IMR-90 (cell line): ENCODE measurements at regions of chr17 and their contacts with region 1.

Region 1: DNA sequence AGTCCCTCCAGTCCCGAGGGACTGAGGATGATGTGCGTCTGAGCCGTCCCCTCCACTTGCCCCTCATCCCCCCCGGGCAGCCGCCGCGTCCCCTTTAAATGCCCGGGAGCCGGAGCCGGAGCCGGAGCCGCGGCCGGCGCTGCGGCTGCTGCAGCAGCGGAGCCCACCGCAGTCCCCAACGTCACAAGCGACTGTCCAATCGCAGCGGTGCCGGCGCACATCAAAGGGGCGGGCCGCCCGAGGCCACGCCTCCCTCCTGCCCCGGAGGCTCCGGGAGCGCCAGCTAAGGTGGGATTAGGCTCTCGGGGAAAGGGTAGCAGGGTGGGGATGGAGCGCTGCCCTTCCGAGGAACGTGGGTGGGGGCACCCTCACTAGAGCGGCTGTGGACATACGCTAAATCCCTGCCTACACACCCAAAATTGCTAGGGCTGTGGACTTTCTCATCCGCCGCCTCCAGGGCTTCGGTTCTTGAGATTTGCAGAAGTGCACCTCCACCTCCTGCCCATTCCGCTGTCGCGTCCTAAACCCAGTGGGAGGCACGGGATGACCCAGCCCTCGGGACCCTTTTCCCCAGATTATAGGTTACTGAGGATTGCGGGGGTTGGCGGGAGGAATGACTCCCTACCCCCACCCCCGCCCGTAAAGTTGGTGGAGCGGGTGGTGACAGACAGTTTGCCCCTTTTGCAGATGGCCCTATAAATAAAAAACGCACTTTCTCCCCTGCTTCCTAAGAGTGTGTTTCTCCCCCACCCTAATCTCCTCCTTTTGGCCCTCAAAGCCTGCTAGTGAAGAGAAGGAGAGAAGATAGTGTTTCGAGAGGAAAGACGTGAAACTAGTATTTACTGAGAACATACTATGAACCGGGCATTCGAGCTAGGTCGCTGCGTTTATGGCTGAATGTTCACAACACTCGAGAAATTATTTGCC is at the start of gene PHOSPHO1:
- DNase-seq: peak; percentile 76
- ATAC-seq: peak; percentile 99
- H3K4me3 ChIP-seq: peak within 1 kb of the TSS; percentile 91
- H3K27ac ChIP-seq: no peak within 1 kb of the TSS; the same call in 1 of the 2 replicates
- H3K4me1 ChIP-seq: no peaks in the 10 kb centered on the region
- H3K27me3 ChIP-seq: peaks cover 23% of the 10 kb centered on the region
- CTCF ChIP-seq: no peak
- POLR2A ChIP-seq: no peak
- RAD21 ChIP-seq: 0 out of 2 replicates have a peak, but pooled peaks have one; percentile 2
- total RNA-seq, gene PHOSPHO1: under 0.01 TPM in 2 replicates

Region 2: DNA sequence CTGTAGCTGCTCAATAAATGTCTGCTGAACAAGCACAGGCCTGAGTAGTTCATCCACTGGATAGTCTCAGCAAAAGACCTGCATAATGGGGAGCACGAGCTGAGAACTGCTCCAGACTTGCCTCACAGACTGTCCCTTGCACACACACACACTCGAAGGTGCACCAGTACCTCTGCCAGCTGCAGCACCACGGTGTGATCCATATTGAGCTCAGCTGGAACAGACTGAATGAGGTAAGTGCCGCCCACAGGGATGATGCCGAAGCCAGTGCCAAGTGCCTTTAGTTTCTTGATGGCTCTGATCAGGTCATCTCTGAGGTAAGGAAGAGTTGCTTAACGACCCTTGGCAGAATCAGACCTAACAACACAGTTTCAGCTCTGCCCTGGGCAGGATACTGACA is 297.9 kb before region 1 on chr17:
- CTCF ChIA-PET with region 1: no interaction called
- POLR2A ChIA-PET with region 1: no interaction called
- dilution Hi-C with region 1: no loop called
- in situ Hi-C with region 1: no loop called
- intact Hi-C with region 1: no loop called
- DNase-seq: no peak
- ATAC-seq: no peak
- H3K4me3 ChIP-seq: no peak overlapping the region
- H3K27ac ChIP-seq: no peak overlapping the region
- H3K4me1 ChIP-seq: no peaks in the 10 kb centered on the region; the same call in 1 of the 2 replicates
- H3K27me3 ChIP-seq: no peaks in the 10 kb centered on the region
- CTCF ChIP-seq: no peak
- POLR2A ChIP-seq: no peak
- RAD21 ChIP-seq: no peak

Region 3: DNA sequence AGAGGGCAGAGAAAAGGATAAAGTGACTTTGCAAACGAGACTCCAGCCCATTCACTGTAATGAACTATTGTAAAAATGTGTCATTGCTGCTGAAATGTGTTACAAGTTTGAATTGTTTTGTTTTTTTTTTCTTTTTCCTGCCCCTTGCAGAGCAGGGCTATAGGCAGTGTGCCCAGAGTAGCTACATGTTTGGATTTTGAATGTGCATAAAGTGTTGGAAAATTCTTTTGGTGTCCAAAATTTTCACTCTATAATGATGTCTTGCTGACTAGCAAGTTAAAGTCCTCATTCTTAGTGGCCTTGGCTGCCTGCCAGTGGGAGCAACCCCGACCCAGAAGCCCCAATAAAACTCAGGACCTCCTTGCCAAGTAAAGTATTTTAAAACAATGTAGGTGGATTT is 167.2 kb before region 1 on chr17:
- CTCF ChIA-PET with region 1: no interaction called
- POLR2A ChIA-PET with region 1: no interaction called
- dilution Hi-C with region 1: no loop called
- in situ Hi-C with region 1: no loop called
- intact Hi-C with region 1: loop called (anchors 5 kb)
- DNase-seq: no peak
- ATAC-seq: peak; percentile 49
- H3K4me3 ChIP-seq: no peak overlapping the region
- H3K27ac ChIP-seq: no peak overlapping the region
- H3K4me1 ChIP-seq: no peaks in the 10 kb centered on the region
- H3K27me3 ChIP-seq: no peaks in the 10 kb centered on the region
- CTCF ChIP-seq: no peak
- POLR2A ChIP-seq: no peak
- RAD21 ChIP-seq: no peak

Region 4: GRCh38 chr17:49180303-49180702 is 50.6 kb before region 1 on chr17:
- CTCF ChIA-PET with region 1: interaction called, 12 read pairs
- POLR2A ChIA-PET with region 1: no interaction called
- dilution Hi-C with region 1: no loop called
- in situ Hi-C with region 1: no loop called
- intact Hi-C with region 1: loop called (anchors 1 kb)
- DNase-seq: peak; percentile 36
- ATAC-seq: peak; percentile 85
- H3K4me3 ChIP-seq: no peak overlapping the region
- H3K27ac ChIP-seq: no peak overlapping the region
- H3K4me1 ChIP-seq: no peaks in the 10 kb centered on the region
- H3K27me3 ChIP-seq: peaks cover 2% of the 10 kb centered on the region
- CTCF ChIP-seq: peak; percentile 81
- POLR2A ChIP-seq: no peak
- RAD21 ChIP-seq: peak; percentile 75

Region 5: DNA sequence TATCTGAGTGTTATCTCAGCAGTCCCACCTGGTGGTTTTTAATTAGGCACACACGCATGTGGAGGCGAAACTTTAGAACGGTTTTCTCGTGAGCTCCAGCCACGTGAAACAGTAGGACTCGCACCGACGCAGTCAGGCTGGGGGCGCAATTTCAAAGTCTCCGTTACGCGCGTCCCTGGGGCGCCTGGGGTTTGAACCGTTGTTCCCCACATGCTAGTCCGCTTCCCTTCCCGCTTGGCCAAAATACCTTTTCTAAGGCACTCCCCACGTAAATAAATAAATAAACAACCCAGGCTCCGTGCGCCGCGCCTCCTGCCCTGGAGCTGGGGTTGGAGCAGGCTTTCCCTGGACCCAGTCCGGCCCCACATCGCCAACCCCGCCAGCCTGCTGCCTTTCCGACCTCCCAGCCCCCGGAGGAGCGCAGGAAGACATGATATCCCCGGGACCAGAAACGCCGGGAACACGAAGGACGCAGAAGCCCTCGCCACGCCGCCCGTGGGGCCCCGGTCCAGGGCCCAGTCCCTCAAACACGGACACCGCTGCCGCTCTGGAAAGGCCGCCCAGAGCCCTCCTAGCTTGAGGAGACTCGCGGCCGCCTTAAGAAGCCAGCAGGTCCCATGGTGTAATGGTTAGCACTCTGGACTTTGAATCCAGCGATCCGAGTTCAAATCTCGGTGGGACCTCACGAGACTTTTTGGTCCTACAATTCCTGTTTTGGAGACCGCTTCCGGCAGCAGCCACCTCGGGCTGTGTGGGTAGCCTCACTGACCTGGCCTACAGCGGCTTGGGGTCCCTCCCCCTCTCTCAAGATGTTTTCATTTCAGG is 38.8 kb before region 1 on chr17:
- CTCF ChIA-PET with region 1: interaction called, 5 read pairs
- POLR2A ChIA-PET with region 1: no interaction called
- dilution Hi-C with region 1: no loop called
- in situ Hi-C with region 1: no loop called
- intact Hi-C with region 1: loop called (anchors 5 kb)
- DNase-seq: peak; percentile 77
- ATAC-seq: peak; percentile 86
- H3K4me3 ChIP-seq: peak overlapping the region; percentile 66
- H3K27ac ChIP-seq: peak overlapping the region; percentile 82
- H3K4me1 ChIP-seq: no peaks in the 10 kb centered on the region
- H3K27me3 ChIP-seq: no peaks in the 10 kb centered on the region
- CTCF ChIP-seq: peak; percentile 35; the same call in 1 of the 2 replicates
- POLR2A ChIP-seq: peak; percentile 55; the same call in 1 of the 2 replicates
- RAD21 ChIP-seq: no peak

Region 6: DNA sequence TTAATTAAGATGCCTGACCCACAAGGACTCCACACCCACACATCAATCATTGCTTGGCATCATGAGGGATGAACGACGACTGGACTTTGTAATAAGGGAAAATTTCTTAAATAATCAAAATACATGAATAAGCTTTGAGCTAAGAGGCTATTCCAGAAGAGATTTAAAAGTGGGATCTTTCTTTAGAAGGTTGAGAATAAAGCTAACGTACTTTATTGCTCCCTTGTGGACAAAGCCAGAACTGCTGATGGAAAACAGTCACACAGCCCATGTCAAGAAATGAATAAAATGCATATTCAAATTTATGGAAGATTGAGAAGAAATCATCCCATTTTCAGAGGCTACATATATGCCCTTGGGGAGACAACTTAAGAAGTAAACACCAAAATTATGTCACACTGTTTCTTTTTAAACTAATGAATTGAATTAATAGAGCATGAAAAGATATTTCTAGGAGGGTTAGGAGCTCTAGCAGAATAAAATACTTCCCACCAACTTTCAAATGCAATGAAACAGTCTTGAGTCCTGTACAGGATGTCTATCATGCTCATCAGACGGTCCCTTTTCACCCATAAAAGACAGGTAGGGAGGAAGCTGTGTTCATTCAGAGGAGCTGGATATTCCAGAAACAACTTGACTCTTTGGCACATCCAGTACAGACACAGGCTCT is 59.9 kb after region 1 on chr17:
- CTCF ChIA-PET with region 1: no interaction called
- POLR2A ChIA-PET with region 1: no interaction called
- dilution Hi-C with region 1: no loop called
- in situ Hi-C with region 1: no loop called
- intact Hi-C with region 1: loop called (anchors 5 kb)
- DNase-seq: peak; percentile 42
- ATAC-seq: peak; percentile 72; the same call in 1 of the 2 replicates
- H3K4me3 ChIP-seq: no peak overlapping the region
- H3K27ac ChIP-seq: no peak overlapping the region
- H3K4me1 ChIP-seq: no peaks in the 10 kb centered on the region
- H3K27me3 ChIP-seq: no peaks in the 10 kb centered on the region
- CTCF ChIP-seq: peak; percentile 72
- POLR2A ChIP-seq: no peak
- RAD21 ChIP-seq: peak; percentile 63